Right ventricle myocardium inferior (tissue), 1 donor: ENCODE measurements at regions of chr2 and their contacts with region 1.

Region 1: DNA sequence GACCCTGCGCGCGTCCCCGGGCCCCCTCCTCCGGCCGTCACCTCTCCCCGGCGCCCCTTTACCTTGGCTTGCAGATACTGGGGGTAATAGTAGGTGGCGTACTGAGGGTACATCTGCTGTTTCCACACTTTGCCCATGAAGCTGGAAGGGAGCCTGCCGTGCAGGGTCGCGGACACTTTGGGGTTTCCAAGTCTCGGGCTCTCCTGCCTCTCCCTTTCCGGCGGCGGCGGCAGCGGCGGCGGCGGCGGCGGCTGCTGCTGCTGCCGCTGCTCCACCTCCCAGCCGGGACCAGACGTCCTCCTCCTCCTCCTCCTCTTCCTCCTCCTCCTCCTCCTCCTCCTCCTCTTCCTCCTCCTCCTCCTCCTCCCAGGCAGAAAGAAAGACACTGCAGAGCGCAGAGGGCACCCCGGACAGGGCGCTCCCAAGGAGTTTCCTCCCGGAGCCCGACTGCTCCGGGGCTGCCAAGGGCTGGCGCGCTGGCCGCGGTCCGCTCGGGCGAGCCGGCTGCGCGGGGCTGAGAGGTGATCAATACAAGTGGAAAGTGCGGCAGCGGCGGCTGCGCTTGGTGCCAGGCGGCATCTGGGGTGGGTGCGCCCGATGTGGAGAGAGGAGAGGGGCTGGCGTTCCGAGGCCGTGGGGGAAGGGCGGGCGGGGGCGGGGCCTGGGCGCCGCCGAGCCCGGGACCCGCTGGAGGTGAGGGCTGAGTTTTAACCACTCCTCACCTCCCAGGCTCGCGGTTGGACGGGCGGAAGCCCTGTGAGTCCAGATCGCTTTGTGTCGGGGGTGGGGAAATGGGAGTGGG is at the start of gene RBMS1:
- DNase-seq: peak; percentile 90
- ATAC-seq: peak; percentile 79
- total RNA-seq, gene RBMS1: 58.2 TPM

Region 2: GRCh38 chr2:160541745-160542144 is 48.3 kb after region 1 on chr2:
- intact Hi-C with region 1: no loop called
- DNase-seq: peak; percentile 39
- ATAC-seq: no peak

Region 3: DNA sequence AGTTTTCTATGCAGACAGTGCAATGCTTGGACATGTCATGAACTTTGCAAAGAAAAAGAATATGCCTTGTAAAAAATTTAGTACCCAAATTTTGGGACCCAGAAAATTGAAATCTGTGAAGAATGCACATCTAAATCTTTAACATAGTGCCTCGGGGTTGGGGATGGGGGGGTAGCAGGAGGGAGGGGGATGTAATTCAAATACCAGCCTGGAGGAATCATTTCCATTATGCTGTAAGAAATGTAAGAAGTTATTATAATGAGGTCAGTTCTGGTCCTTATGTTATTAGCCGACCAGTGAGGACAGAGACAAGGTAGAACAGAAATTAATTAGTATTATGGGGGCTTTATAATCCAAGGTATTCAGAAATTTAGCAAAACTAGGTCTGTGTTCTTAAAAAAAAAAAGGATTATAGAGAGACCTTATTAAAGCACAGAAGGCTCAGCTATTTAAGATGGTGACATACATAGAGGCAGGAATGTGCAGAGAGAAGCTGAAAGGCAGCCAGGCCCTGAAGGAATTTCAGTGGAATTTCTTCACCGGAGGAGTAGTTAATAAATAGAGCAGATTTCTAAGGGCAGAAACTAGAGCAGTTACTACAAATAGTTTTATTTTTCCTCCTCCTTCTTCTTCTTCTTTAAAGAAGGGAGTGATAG is 89.2 kb after region 1 on chr2:
- intact Hi-C with region 1: loop called (anchors 5 kb)
- DNase-seq: no peak
- ATAC-seq: peak; percentile 58

Region 4: DNA sequence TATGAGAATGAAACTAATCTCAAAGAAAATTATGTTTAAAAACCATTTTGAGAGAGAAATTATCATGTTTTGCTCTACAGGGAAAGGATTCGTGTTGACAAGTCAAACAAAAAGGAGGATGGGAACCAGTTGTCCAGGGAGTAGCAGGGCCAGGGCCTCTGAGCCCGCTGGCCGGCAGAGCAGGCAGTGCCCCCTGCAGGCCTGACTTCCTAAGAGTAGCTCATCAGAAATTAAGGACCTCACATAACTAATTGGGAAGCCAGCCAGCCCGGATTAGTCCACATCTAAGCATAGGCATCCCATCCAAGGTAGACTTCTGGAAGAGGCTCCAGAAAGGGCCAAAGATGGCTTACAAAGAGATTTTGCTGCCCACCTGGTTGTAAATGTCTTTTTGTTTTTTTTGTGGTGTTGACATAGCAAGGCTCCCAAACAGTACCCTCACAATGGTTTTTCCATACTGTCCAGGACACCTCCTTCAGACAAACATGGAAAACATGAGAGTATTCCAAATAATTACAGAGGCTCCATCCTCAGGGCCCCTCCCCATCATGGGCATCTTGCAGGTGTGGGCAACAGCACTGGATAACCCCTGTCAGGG is 425.6 kb after region 1 on chr2:
- intact Hi-C with region 1: loop called (anchors 5 kb)
- DNase-seq: peak; percentile 87
- ATAC-seq: peak; percentile 86